ENCODE measurements at regions of chr1 and their contacts with region 1.

Region 1: DNA sequence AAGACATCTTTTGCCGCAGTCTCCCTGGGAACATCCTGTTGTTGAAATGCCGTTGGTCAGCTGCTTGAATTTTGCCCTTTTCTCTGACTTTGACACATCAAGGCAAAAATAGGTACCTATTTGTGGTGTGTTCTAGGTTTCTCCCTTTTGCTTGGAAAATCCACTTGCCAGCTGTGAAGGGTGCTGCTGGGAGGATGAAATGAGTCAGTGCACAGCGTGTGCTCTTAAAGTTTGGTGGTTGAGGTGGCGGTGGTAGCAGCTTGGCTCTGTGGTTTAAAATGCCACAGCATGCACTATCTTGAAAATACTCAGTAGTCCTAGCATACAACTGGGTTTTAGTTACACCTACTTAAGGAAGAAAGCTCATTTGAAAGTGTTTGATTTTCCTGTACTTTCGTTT is 183.8 kb downstream of the DHRS3 start:
- DNase-seq: peak in 6 of 10 donors; percentile 25 to 42 (median 32)
- ATAC-seq: peak; percentile 71 to 73
- H3K4me3 Mint-ChIP-seq: peak overlapping the region; percentile 2 to 81 (median 74)
- H3K27ac Mint-ChIP-seq: peak overlapping the region; percentile 68 to 98 (median 88)
- H3K4me1 Mint-ChIP-seq: peaks cover 41 to 85% (median 81%) of the 10 kb centered on the region in 4 donors
- H3K27me3 Mint-ChIP-seq: no peaks in the 10 kb centered on the region

Region 2: DNA sequence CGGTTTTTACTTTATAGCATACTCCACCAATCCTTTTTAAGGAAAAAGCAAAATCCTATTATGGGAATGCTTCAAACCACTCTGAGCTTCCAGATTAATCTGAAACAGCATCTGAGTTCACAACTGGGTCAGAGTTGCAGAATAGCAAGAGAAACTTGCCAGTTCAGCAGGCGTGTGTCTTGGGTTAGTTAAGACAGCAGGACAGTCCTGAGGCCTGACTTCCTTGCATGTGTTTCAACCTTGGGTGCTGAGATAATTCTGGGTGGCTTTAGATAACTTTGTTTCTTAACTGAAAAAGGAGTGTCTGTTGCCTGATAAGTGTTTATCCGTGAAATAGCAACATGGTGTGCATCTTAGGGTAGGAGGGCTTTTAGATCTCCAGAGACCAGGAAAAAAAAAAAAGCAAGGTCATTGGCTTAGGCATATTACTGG is 14.6 kb after region 1 on chr1:
- POLR2A ChIA-PET with region 1: interaction called, 37 read pairs
- DNase-seq: no peak
- ATAC-seq: no peak
- H3K4me3 Mint-ChIP-seq: peak overlapping the region in 9 of 10 donors; percentile 76 to 88 (median 84)
- H3K27ac Mint-ChIP-seq: peak overlapping the region; percentile 60 to 100 (median 94)
- H3K4me1 Mint-ChIP-seq: peaks cover 41 to 87% (median 80%) of the 10 kb centered on the region in 4 donors
- H3K27me3 Mint-ChIP-seq: no peaks in the 10 kb centered on the region

Region 3: GRCh38 chr1:12454406-12455391 is 20.5 kb after region 1 on chr1:
- POLR2A ChIA-PET with region 1: interaction called, 37 read pairs
- DNase-seq: no peak
- ATAC-seq: no peak
- H3K4me3 Mint-ChIP-seq: peak overlapping the region in 8 of 10 donors; percentile 24 to 71 (median 53)
- H3K27ac Mint-ChIP-seq: peak overlapping the region; percentile 65 to 100 (median 90)
- H3K4me1 Mint-ChIP-seq: peaks cover 30 to 90% (median 90%) of the 10 kb centered on the region in 4 donors
- H3K27me3 Mint-ChIP-seq: no peaks in the 10 kb centered on the region

Measured in naive thymus-derived CD8-positive, alpha-beta T cell (primary cell).